MCF 10A (cell line): ENCODE measurements at regions of chr1 and their contacts with region 1.

Region 1: DNA sequence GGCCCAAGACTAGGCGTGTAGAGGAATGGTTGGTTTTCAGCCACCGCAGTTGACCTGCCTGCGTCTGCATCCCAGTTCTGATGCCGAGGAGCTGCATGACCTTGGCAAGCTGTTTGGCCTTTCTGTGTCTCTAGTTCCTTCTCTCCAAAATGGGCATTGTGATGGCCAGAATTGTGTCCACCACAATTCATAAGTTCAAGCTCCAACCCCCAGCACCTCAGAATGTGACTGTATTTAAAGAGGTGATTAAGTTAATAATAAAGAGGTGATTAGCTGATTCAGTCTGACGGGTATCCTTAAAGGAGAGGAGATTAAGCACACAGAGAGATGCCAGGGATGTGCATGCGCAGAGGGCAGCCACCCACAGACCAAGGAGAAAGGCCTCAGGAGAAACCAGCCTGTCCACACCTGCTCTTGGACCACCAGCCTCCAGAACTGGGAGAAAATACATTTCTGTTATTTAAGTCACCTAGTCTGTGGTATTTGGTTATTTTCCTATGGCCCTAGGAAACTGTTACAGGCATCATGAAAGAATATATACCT is 28.5 kb downstream of the MAB21L3 start:
- DNase-seq: no peak
- H3K4me3 Mint-ChIP-seq: no peak overlapping the region
- H3K27ac Mint-ChIP-seq: no peak overlapping the region
- H3K4me1 Mint-ChIP-seq: no peaks in the 10 kb centered on the region
- H3K27me3 Mint-ChIP-seq: no peaks in the 10 kb centered on the region
- CTCF ChIP-seq: no peak

Region 2: GRCh38 chr1:115946116-115946515 is 193.5 kb before region 1 on chr1:
- CTCF ChIA-PET with region 1: no interaction called
- POLR2A ChIA-PET with region 1: no interaction called
- intact Hi-C with region 1: no loop called
- DNase-seq: no peak
- H3K4me3 Mint-ChIP-seq: no peak overlapping the region
- H3K27ac Mint-ChIP-seq: no peak overlapping the region
- H3K4me1 Mint-ChIP-seq: peaks cover 6% of the 10 kb centered on the region
- H3K27me3 Mint-ChIP-seq: no peaks in the 10 kb centered on the region
- CTCF ChIP-seq: no peak

Region 3: GRCh38 chr1:116122955-116123757 is 16.5 kb before region 1 on chr1:
- CTCF ChIA-PET with region 1: interaction called, 12 read pairs
- POLR2A ChIA-PET with region 1: no interaction called
- intact Hi-C with region 1: no loop called
- DNase-seq: peak; percentile 75
- H3K4me3 Mint-ChIP-seq: no peak overlapping the region
- H3K27ac Mint-ChIP-seq: no peak overlapping the region
- H3K4me1 Mint-ChIP-seq: peaks cover 8% of the 10 kb centered on the region
- H3K27me3 Mint-ChIP-seq: no peaks in the 10 kb centered on the region
- CTCF ChIP-seq: no peak

Region 4: GRCh38 chr1:116202934-116203723 is 63.5 kb after region 1 on chr1:
- CTCF ChIA-PET with region 1: no interaction called
- POLR2A ChIA-PET with region 1: no interaction called
- intact Hi-C with region 1: no loop called
- DNase-seq: no peak
- H3K4me3 Mint-ChIP-seq: no peak overlapping the region
- H3K27ac Mint-ChIP-seq: no peak overlapping the region
- H3K4me1 Mint-ChIP-seq: no peaks in the 10 kb centered on the region
- H3K27me3 Mint-ChIP-seq: peaks cover 31% of the 10 kb centered on the region
- CTCF ChIP-seq: no peak

Region 5: DNA sequence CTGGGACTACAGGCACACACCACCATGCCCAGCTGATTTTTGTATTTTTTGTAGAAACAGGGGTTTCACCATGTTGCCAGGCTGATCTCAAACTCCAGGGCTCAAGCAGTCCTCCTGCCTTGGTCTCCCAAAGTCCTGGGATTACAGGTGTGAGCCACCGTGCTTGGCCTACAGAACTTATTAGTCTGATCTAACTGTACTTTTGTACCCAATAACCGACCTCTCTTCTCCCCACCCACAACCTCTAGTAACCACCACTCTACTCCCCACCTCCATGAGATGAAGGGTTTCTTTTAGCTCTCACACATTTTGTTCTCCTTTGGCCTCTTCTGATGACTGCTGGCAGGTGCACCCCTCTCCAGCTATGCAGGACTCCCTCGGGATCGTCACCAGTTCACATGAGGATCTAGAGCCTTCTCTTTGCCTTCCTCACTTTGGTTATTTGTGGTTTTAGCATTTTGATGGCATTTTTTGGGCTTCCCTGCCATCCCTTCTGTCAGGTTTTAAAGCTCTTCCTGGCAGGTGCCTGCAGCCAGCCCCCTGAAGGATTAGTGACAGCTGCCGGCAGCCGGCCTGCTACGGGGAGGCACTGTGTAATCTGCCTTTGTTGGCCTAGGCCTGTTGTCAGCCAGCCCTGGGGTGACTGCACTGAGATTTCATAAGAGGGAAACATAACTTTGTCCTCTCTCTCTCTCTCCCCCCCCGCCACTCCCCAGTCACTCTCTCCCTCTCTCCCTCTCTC is 133.6 kb after region 1 on chr1:
- CTCF ChIA-PET with region 1: no interaction called
- POLR2A ChIA-PET with region 1: no interaction called
- intact Hi-C with region 1: no loop called
- DNase-seq: no peak
- H3K4me3 Mint-ChIP-seq: no peak overlapping the region
- H3K27ac Mint-ChIP-seq: no peak overlapping the region
- H3K4me1 Mint-ChIP-seq: peaks cover 9% of the 10 kb centered on the region
- H3K27me3 Mint-ChIP-seq: no peaks in the 10 kb centered on the region
- CTCF ChIP-seq: no peak

Region 6: DNA sequence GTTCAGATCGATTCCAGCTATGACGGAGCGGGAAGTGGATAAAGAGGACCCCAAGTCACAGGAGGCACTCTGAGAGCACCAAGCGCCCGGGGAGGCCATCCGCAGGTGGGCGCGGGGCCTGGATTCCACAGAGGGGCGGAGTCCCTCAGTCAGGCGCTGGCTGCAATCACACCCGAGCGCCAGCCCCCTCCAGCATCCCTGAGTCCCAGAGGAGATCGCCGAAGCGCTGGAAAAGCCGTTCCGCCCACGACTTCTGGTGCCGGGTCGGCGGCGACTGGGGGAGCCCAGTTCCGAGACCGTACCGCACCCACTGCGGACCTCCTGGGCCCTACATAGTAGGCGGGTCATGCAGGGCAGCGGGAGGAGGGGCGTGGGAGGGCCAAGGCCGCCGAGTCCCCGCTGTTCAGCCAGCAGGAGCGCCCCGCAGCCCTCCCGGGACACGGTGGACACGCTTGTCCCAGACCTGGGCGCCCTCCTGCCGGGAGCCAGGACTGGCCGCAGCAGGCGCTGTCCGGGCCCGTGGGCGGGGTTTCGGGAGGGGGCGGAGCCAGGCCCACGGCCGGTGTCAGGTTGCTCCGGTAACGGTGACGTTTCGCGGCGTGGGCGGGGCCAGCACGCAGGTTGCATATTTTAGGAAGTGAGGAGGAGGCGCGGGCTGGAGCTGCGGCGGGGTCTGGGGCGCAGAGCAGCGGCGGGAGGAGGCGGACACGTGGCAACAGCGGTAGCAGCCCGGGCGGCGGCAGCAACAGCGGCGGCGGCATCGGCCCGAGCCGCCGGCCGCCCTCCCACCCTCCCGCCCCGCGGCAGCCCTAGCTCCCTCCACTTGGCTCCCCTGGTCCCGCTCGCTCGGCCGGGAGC is 233.2 kb after region 1 on chr1 and contains the start of gene ATP1A1:
- CTCF ChIA-PET with region 1: interaction called, 16 read pairs
- POLR2A ChIA-PET with region 1: interaction called, 12 read pairs
- intact Hi-C with region 1: no loop called
- DNase-seq: peak; percentile 93
- H3K4me3 Mint-ChIP-seq: peak within 1 kb of the TSS; percentile 94
- H3K27ac Mint-ChIP-seq: peak within 1 kb of the TSS; percentile 78
- H3K4me1 Mint-ChIP-seq: peaks cover 18% of the 10 kb centered on the region
- H3K27me3 Mint-ChIP-seq: no peaks in the 10 kb centered on the region
- CTCF ChIP-seq: no peak
- total RNA-seq, gene ATP1A1: 361 and 378 TPM in 2 replicates

Region 7: GRCh38 chr1:116457946-116458604 is 318.4 kb after region 1 on chr1:
- CTCF ChIA-PET with region 1: interaction called, 13 read pairs
- POLR2A ChIA-PET with region 1: no interaction called
- intact Hi-C with region 1: no loop called
- DNase-seq: no peak
- H3K4me3 Mint-ChIP-seq: no peak overlapping the region
- H3K27ac Mint-ChIP-seq: no peak overlapping the region
- H3K4me1 Mint-ChIP-seq: no peaks in the 10 kb centered on the region
- H3K27me3 Mint-ChIP-seq: peaks cover 26% of the 10 kb centered on the region
- CTCF ChIP-seq: no peak

Region 8: DNA sequence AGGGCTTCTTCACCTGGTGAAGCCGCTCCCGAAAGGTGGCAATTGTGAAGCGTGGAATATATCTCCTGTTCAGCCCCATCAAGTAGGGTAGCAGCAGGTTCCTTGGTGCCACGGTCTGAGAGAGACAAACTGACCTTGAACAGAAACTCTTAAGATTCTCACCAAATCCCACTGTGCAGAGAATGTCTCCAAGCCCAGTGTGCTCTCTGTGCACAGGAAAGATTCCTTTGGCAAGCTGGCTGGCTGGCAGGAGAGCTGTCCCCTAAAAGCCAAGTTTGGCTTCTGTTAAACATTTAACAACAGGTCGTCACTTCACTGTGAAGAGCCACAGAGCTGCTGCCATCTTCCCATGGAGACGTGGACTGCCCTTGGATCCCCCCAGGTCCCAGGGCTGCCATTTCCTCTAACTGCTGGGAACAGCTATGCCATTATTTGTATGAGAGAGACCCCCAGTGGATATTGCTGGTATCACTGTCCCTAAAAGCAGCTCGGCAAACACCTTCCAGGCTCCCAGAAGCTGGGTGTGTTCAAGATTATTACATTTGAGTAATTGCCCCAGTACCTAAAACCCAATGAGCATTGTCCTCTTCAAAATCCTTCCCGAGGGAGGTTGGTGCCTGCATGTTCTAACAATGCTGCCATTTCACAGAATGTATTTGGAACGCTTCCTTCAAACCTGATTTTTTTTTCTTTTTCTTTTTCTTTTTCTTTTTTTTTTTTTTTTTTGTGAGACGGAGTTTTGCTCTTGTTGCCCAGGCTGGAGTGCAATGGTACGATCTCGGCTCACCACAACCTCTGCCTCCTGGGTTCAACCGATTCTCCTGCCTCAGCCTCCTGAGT is 359.3 kb after region 1 on chr1:
- CTCF ChIA-PET with region 1: interaction called, 222 read pairs
- POLR2A ChIA-PET with region 1: interaction called, 8 read pairs
- intact Hi-C with region 1: loop called (anchors 1 kb)
- DNase-seq: peak; percentile 73
- H3K4me3 Mint-ChIP-seq: no peak overlapping the region
- H3K27ac Mint-ChIP-seq: no peak overlapping the region
- H3K4me1 Mint-ChIP-seq: peaks cover 17% of the 10 kb centered on the region
- H3K27me3 Mint-ChIP-seq: no peaks in the 10 kb centered on the region
- CTCF ChIP-seq: peak; percentile 86

Region 9: GRCh38 chr1:116511459-116512019 is 371.9 kb after region 1 on chr1:
- CTCF ChIA-PET with region 1: interaction called, 10 read pairs
- POLR2A ChIA-PET with region 1: no interaction called
- intact Hi-C with region 1: no loop called
- DNase-seq: no peak
- H3K4me3 Mint-ChIP-seq: no peak overlapping the region
- H3K27ac Mint-ChIP-seq: peak overlapping the region; percentile 5
- H3K4me1 Mint-ChIP-seq: peaks cover 48% of the 10 kb centered on the region
- H3K27me3 Mint-ChIP-seq: no peaks in the 10 kb centered on the region
- CTCF ChIP-seq: no peak